Activated CD8-positive, alpha-beta T cell treated with anti-CD3 and anti-CD28 coated beads for 36 hours (primary cell): ENCODE measurements at regions of chr17 and their contacts with region 1.

Region 1: GRCh38 chr17:37844158-37844976 is 79.8 kb upstream of the TBC1D3K start:
- DNase-seq: peak; percentile 77
- ATAC-seq: peak; percentile 90
- H3K4me3 Mint-ChIP-seq: no peak overlapping the region
- H3K27ac Mint-ChIP-seq: no peak overlapping the region
- H3K4me1 Mint-ChIP-seq: peaks cover 21% of the 10 kb centered on the region
- H3K27me3 Mint-ChIP-seq: peaks cover 5% of the 10 kb centered on the region
- CTCF ChIP-seq: peak; percentile 82

Region 2: GRCh38 chr17:37830151-37830993 is 14.0 kb before region 1 on chr17:
- CTCF ChIA-PET with region 1: interaction called, 10 read pairs
- POLR2A ChIA-PET with region 1: no interaction called
- intact Hi-C with region 1: no loop called
- DNase-seq: no peak
- ATAC-seq: no peak
- H3K4me3 Mint-ChIP-seq: no peak overlapping the region
- H3K27ac Mint-ChIP-seq: no peak overlapping the region
- H3K4me1 Mint-ChIP-seq: peaks cover 23% of the 10 kb centered on the region
- H3K27me3 Mint-ChIP-seq: peaks cover 18% of the 10 kb centered on the region
- CTCF ChIP-seq: no peak